Activated CD4-positive, alpha-beta memory T cell treated with anti-CD3 and anti-CD28 coated beads, Interleukin-2, amount 10 ng/mL, durations not matched to agents 7 days and 5 days (primary cell): ENCODE measurements at regions of chr6 and their contacts with region 1.

Region 1: DNA sequence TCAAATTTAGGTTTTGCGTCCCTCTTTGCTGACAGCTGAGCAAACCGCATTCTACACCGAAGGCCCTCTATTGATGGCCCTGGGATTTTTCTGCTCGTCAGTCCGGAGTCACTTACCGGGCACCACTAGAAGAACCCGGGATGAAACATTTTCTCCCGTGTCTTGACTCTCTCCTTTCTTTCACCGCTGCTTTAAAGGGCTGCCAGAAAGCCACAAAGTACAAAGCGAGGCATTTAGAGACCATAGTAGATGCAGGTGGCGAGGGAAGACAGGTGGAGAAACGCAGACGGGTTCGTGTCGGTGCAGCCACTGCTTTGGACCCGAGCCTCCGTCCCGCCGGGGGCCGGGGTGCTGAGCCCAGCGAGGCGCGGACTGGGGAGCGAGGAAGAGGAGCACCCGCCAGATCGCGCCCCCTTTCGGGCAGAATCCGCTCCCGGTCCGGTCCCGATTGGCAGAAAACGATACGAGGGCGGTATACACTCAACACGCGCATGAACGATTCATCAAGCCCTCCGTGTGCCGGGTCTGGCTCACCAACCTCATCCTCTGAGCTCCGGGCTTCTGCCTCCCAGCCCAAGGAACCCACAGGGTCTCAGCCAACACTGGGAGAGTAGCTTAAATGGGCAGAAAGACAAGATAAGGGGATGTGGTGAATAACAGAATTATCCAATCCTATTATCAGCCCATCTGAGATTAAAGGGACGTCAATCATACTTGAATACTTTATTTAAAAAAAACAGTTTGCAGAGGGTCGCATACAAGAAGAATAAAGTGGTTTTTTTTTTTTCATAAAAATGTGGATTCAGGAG is 84.9 kb downstream of the TRIM27 start:
- DNase-seq: peak; percentile 78
- H3K4me3 Mint-ChIP-seq: peak overlapping the region; percentile 79
- H3K27ac Mint-ChIP-seq: peak overlapping the region; percentile 48
- H3K4me1 Mint-ChIP-seq: peaks cover 23% of the 10 kb centered on the region
- H3K27me3 Mint-ChIP-seq: peaks cover 38% of the 10 kb centered on the region

Region 2: DNA sequence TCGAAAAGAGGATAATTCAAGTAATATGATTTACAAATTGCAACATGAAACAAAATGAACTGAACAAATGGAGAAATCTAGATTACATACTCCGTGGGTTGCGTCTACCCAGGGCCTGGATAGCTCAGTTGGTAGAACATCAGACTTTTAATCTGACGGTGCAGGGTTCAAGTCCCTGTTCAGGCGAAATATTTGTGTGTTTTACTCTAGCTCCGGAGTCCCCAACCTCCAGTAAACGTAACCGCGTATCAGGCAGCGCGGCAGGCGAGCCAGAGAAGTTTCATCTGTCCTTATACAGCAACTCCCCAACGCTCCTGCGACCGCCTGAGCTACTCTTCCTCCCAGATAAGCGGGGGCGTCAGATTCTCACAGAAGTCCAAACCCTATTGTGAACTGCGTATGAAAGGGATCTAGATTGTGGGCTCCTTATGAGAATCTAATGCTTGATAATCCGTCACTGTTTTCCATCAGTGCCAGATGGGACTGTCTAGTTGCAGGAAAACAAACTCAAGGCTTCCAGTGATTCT is 91.1 kb before region 1 on chr6:
- CTCF ChIA-PET with region 1: no interaction called
- POLR2A ChIA-PET with region 1: no interaction called
- DNase-seq: no peak
- H3K4me3 Mint-ChIP-seq: no peak overlapping the region
- H3K27ac Mint-ChIP-seq: no peak overlapping the region
- H3K4me1 Mint-ChIP-seq: no peaks in the 10 kb centered on the region
- H3K27me3 Mint-ChIP-seq: peaks cover 48% of the 10 kb centered on the region

Region 3: DNA sequence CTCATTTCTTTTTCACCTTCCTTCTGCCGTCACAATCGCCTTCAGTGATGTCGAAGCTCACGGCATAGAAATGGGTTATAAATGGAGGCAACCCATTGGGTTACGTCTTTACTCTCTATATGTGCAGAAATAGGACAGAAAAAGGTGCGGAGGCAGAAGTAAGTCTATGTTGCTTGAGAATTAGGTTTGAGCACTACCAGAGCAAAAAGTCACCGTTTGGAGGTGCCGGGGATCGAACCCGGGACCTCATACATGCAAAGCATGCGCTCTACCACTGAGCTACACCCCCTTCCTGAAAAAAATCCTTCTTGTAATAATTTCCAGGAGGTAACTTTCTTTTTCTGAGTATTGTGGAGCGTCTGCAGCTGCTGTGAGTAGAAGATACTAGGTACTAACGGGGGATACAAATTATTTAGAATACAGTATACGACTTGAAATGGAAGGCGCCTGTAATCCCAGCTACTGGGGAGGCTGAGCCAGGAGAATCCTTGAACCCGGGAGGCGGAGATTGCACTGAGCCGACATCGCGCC is 49.2 kb before region 1 on chr6:
- CTCF ChIA-PET with region 1: no interaction called
- POLR2A ChIA-PET with region 1: no interaction called
- DNase-seq: no peak
- H3K4me3 Mint-ChIP-seq: peak overlapping the region; percentile 49
- H3K27ac Mint-ChIP-seq: no peak overlapping the region
- H3K4me1 Mint-ChIP-seq: peaks cover 15% of the 10 kb centered on the region
- H3K27me3 Mint-ChIP-seq: peaks cover 85% of the 10 kb centered on the region

Region 4: GRCh38 chr6:28863604-28864320 is 24.9 kb after region 1 on chr6:
- CTCF ChIA-PET with region 1: interaction called, 35 read pairs
- POLR2A ChIA-PET with region 1: interaction called, 23 read pairs
- DNase-seq: peak; percentile 85
- H3K4me3 Mint-ChIP-seq: peak overlapping the region; percentile 81
- H3K27ac Mint-ChIP-seq: peak overlapping the region; percentile 76
- H3K4me1 Mint-ChIP-seq: peaks cover 46% of the 10 kb centered on the region
- H3K27me3 Mint-ChIP-seq: peaks cover 12% of the 10 kb centered on the region

Region 5: GRCh38 chr6:28895134-28895812 is 56.4 kb after region 1 on chr6:
- CTCF ChIA-PET with region 1: interaction called, 41 read pairs
- POLR2A ChIA-PET with region 1: interaction called, 5 read pairs
- DNase-seq: peak; percentile 95
- H3K4me3 Mint-ChIP-seq: peak overlapping the region; percentile 89
- H3K27ac Mint-ChIP-seq: peak overlapping the region; percentile 99
- H3K4me1 Mint-ChIP-seq: peaks cover 20% of the 10 kb centered on the region
- H3K27me3 Mint-ChIP-seq: peaks cover 2% of the 10 kb centered on the region

Region 6: GRCh38 chr6:28940858-28941680 is 102.2 kb after region 1 on chr6:
- CTCF ChIA-PET with region 1: interaction called, 19 read pairs
- POLR2A ChIA-PET with region 1: interaction called, 12 read pairs
- DNase-seq: peak; percentile 78
- H3K4me3 Mint-ChIP-seq: peak overlapping the region; percentile 88
- H3K27ac Mint-ChIP-seq: peak overlapping the region; percentile 93
- H3K4me1 Mint-ChIP-seq: peaks cover 51% of the 10 kb centered on the region
- H3K27me3 Mint-ChIP-seq: no peaks in the 10 kb centered on the region

Region 7: DNA sequence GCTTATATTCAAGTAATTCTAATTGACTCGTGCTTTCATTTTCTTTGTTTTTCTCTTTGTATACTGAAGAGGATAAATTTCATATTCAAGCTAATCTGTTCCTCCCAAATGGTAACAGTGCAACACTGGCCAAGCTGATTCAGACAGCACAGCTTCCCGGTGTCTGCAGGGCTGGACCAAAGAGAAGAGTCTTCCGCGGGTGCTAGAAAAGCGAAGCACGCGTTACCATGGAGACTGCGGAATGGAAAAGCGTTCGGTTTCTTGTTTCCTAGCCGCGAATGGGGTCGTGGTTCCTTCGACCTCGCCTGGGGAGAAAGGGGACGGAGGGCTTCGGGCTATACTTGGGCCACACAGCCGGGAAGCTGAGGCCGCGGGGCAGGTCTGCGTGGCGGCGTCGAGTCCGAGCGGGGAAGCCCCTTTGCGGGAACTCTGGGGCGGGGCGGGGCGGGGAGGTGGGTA is 172.5 kb after region 1 on chr6:
- CTCF ChIA-PET with region 1: interaction called, 87 read pairs
- POLR2A ChIA-PET with region 1: interaction called, 25 read pairs
- DNase-seq: peak; percentile 60
- H3K4me3 Mint-ChIP-seq: peak overlapping the region; percentile 89
- H3K27ac Mint-ChIP-seq: peak overlapping the region; percentile 56
- H3K4me1 Mint-ChIP-seq: peaks cover 24% of the 10 kb centered on the region
- H3K27me3 Mint-ChIP-seq: peaks cover 15% of the 10 kb centered on the region